ENCODE measurements at regions of chrX and their contacts with region 1.

Region 1: GRCh38 chrX:24204331-24204730 is 54.8 kb downstream of the ZFX start:
- DNase-seq: no peak
- H3K4me3 Mint-ChIP-seq: no peak overlapping the region
- H3K27ac Mint-ChIP-seq: peak overlapping the region; percentile 23
- H3K4me1 Mint-ChIP-seq: peaks cover 49% of the 10 kb centered on the region
- H3K27me3 Mint-ChIP-seq: no peaks in the 10 kb centered on the region

Region 2: DNA sequence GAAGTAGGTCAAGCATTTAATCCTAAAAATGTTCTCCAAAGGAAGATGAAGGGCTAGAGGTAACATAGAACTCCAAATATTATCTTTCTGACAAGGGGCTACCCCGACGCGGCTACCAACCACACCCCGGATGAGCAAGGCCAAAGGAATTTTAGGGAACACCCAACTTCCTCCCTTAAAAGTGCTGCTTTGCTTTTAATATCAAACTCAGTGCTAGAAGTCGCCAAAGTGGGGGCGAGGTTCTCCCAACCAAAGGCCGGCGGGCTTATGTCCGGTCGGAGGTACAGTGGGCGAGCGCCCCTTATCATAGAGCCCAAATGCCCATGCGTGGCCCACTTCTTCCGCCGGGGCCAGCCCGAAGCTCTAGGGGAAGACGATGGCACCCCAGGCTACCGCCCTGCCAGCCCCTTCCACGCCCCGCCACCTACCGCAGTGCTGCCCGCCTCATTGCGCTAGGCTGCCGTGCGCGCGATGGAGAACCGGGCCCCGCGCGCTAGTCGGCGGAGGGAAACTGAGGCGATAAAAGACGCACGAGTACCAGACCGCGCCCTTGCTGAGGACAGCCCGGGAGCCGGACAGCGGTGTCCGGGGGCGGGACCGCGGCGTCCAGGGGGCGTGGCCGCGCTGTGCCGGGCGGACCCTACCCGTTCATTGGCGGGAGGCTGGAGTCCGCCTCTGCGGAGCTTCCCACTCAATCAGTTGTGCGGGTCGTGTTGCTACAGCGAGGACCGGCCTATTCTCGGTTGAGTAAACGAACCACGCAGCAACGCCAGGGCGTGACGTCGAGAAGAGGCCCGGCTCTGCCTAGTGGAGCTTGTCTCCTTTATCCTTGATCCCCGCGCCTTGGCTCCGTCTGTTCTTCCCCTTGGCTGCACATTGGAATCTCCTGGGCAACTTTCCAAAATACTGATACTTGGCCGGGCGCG is 461.4 kb before region 1 on chrX and contains the start of gene ACOT9:
- CTCF ChIA-PET with region 1: no interaction called
- POLR2A ChIA-PET with region 1: no interaction called
- intact Hi-C with region 1: no loop called
- DNase-seq: peak; percentile 87
- H3K4me3 Mint-ChIP-seq: peak within 1 kb of the TSS; percentile 86
- H3K27ac Mint-ChIP-seq: peak within 1 kb of the TSS; percentile 86
- H3K4me1 Mint-ChIP-seq: peaks cover 32% of the 10 kb centered on the region
- H3K27me3 Mint-ChIP-seq: no peaks in the 10 kb centered on the region
- total RNA-seq, gene ACOT9: 50.2 to 52.1 TPM

Region 3: GRCh38 chrX:24169211-24169610 is 35.1 kb before region 1 on chrX:
- CTCF ChIA-PET with region 1: no interaction called
- POLR2A ChIA-PET with region 1: no interaction called
- intact Hi-C with region 1: loop called (anchors 2 kb)
- DNase-seq: no peak
- H3K4me3 Mint-ChIP-seq: peak overlapping the region; percentile 53
- H3K27ac Mint-ChIP-seq: peak overlapping the region; percentile 92
- H3K4me1 Mint-ChIP-seq: peaks cover 52% of the 10 kb centered on the region
- H3K27me3 Mint-ChIP-seq: no peaks in the 10 kb centered on the region

Region 4: DNA sequence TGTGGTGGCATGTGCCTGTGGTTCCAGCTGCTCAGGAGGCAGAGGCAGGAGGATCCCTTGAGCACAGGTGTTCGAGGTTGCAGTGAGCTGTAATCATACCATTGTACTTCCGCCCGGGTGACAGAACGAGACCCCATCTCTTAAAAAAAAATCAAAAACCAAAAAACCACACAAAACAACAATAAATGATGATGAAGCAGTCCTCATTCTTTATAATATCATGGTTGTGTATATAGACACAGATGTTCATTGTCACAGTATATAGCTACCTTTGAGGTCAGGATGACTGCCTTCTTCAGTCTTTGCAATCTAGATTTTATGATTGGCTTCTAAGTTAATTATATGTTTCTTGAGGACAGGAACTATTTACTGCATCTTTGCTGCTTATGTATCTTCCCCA is 17.8 kb before region 1 on chrX:
- CTCF ChIA-PET with region 1: no interaction called
- POLR2A ChIA-PET with region 1: no interaction called
- intact Hi-C with region 1: loop called (anchors 2 kb)
- DNase-seq: no peak
- H3K4me3 Mint-ChIP-seq: no peak overlapping the region
- H3K27ac Mint-ChIP-seq: no peak overlapping the region
- H3K4me1 Mint-ChIP-seq: peaks cover 31% of the 10 kb centered on the region
- H3K27me3 Mint-ChIP-seq: no peaks in the 10 kb centered on the region